Right cardiac atrium (tissue), 5 donors: ENCODE measurements at regions of chr7 and their contacts with region 1.

Region 1: DNA sequence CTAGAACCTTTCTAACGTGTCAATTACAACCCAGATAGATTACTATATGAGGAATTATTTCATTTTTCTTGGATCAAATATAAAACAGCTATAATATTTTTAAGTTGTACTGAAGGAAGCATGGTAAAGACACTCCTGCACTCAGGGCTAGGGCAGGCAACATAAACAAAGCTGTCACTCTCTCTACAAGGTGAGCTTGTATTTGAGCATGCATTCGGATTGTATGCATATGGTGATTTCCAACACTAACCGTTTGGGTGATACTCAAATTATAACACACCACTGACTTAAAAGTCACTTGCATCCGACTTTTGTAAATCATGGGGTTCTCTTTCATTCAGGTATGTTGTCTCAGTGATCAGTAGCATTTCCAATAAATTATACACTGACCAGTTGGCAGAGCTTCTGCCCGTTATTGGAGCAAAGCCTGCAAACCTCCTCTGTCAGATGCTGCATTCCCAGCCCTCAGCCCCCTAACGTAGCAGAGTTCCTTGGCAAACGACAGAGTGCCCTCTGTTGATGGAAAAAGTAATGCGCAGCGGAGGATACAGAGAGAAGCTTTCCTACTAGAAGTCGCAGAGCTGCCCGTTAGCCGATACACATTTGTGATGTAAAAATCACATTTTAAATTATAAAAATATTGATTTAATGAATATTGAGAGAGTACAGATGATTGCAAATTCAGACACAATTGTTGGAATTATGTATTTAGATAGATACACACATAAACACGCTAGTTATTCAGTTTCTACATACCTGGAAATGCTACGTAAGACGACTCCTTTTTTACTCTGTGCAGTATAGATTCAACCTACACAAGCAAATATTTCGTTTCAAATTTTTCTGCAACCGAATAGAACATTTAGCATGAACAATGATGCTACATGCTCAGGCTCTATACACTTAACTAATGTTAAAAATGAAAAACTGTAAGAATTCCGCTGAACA is 173.9 kb upstream of the SP4 start:
- DNase-seq: peak in 2 of 3 donors; percentile 9 to 37
- ATAC-seq: no peak
- H3K4me3 ChIP-seq: no peak overlapping the region
- H3K27ac ChIP-seq: no peak overlapping the region
- H3K4me1 ChIP-seq: no peaks in the 10 kb centered on the region
- H3K27me3 ChIP-seq: no peaks in the 10 kb centered on the region

Region 2: DNA sequence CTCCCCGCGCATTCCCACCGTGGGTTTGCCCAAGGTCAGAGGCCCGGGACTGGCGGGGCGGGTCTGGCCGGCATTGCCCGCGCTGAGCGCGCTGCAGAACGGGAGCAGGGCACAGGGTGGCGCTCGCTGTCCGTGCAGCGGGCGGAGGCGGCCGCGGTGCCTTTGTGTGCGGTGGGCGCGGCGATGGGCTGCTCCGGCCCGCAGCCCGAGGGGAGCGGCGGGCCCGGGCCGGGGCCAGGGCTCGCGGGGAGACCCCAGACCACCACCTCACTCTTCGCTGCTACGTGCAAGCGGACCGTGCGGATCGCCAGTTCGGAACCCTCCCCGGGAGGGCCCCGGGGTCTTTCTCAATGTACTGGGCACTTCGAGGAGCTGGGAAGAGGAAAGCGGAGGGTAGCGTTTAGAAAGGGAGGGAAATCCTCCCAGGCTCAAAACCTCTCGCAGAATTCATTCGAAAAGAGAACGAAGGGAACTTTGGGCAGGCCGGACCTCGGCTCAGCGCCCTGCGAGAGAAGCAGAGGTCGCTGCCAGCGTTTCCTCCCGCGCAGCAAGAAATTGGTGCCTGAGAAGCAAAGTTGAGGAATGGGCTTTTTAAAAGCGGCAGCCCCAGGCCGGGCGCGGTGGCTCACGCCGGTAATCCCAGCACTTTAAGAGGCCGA is 475.8 kb before region 1 on chr7:
- intact Hi-C with region 1: loop called in 3 of 4 experiments (anchors 5 to 10 kb)
- DNase-seq: peak in 2 of 3 donors; percentile 60 to 72
- ATAC-seq: peak; percentile 86 to 91
- H3K4me3 ChIP-seq: peak overlapping the region; percentile 31
- H3K27ac ChIP-seq: no peak overlapping the region
- H3K4me1 ChIP-seq: no peaks in the 10 kb centered on the region
- H3K27me3 ChIP-seq: peaks cover 2% of the 10 kb centered on the region

Region 3: DNA sequence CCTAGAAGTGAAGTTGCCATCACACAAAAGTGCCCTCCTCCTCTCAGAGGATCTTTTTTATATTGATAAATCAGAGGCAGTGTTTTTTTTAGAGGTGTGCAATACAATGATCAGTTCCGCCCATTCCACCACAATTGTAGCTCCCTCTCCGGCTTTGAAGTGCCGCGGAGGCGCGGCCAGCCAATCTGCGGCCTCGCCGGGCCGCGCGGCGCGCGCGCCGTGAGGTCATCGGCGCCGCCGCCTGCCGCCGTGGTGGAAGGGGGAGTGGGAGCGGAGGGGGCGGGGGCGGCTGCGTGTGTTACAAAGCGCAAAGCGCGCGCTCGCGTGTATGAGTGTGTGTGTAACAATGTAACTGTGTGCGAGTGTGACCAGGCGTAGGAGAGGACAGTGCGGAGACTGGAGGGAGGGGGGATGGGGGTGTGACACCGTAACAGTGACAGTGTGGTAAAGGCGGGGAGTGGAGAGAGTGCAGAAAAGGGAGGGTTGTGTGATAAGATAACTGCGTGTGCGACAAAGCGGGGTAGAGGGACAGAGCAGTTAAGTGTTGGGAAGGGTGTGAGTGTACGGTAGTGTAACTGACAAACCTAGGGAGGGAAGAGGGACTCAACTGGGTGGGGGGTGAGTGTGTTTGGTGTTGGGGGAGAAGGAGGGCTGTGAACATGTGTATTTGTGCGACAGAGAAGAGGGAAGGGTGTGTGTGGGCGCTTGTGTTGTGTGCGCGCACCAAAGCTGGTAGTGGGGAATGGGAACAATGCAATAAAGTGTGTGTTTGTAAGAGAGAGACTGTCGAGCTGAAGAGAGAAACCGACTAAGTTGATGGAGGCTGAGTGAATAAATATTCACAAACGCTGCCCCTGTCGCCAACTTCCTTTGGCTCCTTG is 467.0 kb before region 1 on chr7 and contains the start of gene SP8:
- intact Hi-C with region 1: loop called in 1 of 4 experiments (anchors 10 kb)
- DNase-seq: peak in 1 of 3 donors; percentile 57
- ATAC-seq: peak; percentile 31 to 48
- H3K4me3 ChIP-seq: peak within 1 kb of the TSS; percentile 64
- H3K27ac ChIP-seq: no peak within 1 kb of the TSS
- H3K4me1 ChIP-seq: peaks cover 5% of the 10 kb centered on the region
- H3K27me3 ChIP-seq: peaks cover 2% of the 10 kb centered on the region
- total RNA-seq, gene SP8: not detected

Region 4: GRCh38 chr7:21041252-21041651 is 212.8 kb before region 1 on chr7:
- intact Hi-C with region 1: no loop called
- DNase-seq: no peak
- ATAC-seq: no peak
- H3K4me3 ChIP-seq: no peak overlapping the region
- H3K27ac ChIP-seq: no peak overlapping the region
- H3K4me1 ChIP-seq: no peaks in the 10 kb centered on the region
- H3K27me3 ChIP-seq: no peaks in the 10 kb centered on the region

Region 5: GRCh38 chr7:21330462-21331178 is 76.6 kb after region 1 on chr7:
- intact Hi-C with region 1: no loop called
- DNase-seq: peak in 1 of 3 donors; percentile 54
- ATAC-seq: no peak
- H3K4me3 ChIP-seq: no peak overlapping the region
- H3K27ac ChIP-seq: no peak overlapping the region
- H3K4me1 ChIP-seq: no peaks in the 10 kb centered on the region
- H3K27me3 ChIP-seq: no peaks in the 10 kb centered on the region

Region 6: GRCh38 chr7:21507626-21508343 is 253.8 kb after region 1 on chr7:
- intact Hi-C with region 1: loop called in 3 of 4 experiments (anchors 5 to 10 kb)
- DNase-seq: no peak
- ATAC-seq: peak; percentile 40 to 48
- H3K4me3 ChIP-seq: no peak overlapping the region
- H3K27ac ChIP-seq: no peak overlapping the region
- H3K4me1 ChIP-seq: no peaks in the 10 kb centered on the region
- H3K27me3 ChIP-seq: no peaks in the 10 kb centered on the region